Natural killer cell (primary cell): ENCODE measurements at regions of chr7 and their contacts with region 1.

Region 1: DNA sequence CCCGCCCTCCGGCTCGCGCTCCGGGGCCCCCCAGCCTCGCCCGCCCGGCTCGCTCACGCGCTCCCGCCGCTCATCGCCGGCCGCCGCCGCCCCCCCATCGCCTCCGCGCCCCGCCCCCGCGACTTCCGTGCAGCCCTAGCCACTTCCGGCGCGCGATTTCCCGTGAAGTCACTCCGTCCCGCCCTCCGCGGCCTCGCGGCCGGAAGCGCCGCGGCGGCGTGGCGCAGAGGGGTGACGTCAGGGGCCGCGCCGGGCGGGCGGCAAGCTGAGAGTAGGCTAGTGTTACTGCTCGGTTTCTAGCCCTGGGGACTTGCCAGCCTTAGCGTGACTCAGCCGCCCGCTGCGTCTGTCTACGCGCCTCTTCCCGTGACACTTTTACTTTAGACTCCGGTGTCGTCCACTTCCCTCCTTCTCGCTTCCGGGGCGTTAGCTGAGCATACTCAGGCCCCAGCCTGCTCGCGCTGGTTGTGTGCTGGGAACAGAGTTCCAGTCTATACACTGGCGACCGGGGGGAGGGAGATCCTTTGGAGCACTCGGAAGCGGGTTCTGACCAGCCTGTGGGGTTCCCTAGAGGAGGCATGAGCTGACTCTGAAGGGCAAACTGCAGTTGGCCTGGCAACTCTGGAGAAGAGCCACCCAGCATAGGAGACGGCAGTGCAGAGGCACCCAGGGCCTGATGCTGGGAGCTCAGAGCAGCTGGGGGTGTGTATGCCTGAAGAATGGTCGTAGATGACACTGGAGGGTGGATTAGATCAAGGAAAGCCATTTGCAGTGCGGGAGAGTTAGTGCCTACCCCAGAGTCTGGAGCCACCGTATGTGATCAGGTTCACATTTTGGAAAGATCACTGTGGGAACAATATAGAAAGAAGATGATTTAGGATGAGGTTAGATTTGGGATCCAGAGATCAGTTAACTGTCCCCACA is at the start of gene PURB:
- DNase-seq: peak; percentile 98 to 99
- ATAC-seq: peak; percentile 83 to 94 (median 86)
- H3K4me3 ChIP-seq: peak within 1 kb of the TSS; percentile 75
- H3K4me3 Mint-ChIP-seq: peak within 1 kb of the TSS; percentile 99
- H3K27ac ChIP-seq: peak within 1 kb of the TSS; percentile 97
- H3K27ac Mint-ChIP-seq: peak within 1 kb of the TSS; percentile 100
- H3K4me1 ChIP-seq: peaks cover 35% of the 10 kb centered on the region
- H3K4me1 Mint-ChIP-seq: peaks cover 34 to 45% of the 10 kb centered on the region in 2 donors
- H3K27me3 ChIP-seq: no peaks in the 10 kb centered on the region
- H3K27me3 Mint-ChIP-seq: no peaks in the 10 kb centered on the region
- CTCF ChIP-seq: no peak
- total RNA-seq, gene PURB: 28.5 to 36.0 (median 33.7) TPM

Region 2: DNA sequence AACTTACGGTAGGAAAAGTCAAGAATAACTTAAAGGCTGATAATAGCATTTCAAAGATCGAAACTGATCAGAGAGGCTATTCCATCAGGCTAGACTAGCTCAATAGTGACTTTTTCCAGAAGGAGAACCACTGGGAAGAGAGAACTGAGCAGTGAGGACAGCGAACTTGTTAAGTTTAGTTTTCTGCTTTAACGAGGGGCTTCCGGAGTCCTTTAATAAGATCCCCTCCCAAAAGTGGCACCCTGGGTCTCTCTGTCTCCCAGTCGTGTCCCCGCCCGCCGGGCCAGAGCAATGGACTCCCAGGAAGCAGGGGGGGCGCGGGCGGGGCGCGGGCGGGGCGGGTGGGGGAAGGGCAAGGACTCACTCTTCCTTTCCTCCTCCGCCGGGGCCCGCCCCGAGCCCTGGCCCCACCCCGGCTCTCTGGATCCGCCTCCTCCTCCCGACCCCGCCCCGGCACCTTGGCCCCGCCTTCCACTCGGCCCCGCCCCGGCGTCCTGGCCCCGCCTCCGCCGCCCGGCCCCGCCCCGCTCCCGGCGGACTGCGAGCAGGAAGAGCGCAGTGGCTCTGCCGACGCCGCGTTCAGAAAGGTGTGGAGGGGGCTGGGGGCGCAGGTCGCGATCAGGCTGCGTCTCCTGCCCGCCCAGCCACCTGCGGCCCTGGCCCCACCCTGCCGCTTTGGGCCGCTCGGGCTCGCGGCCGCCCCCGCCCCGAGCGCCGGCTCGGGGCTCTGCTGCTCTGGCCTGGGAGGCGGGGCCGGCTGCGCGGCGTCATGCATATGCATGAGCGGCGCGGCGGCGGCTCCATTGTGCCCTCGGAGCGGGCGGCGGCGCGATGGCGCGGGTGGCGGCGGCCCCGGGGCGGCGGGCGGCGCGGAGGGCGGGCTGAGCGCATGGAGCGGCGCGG is 137.4 kb before region 1 on chr7 and contains the start of gene ZMIZ2:
- intact Hi-C with region 1: no loop called
- DNase-seq: peak; percentile 93 to 94
- ATAC-seq: peak; percentile 89 to 97 (median 93)
- H3K4me3 ChIP-seq: peak within 1 kb of the TSS; percentile 78
- H3K4me3 Mint-ChIP-seq: peak within 1 kb of the TSS; percentile 94
- H3K27ac ChIP-seq: peak within 1 kb of the TSS; percentile 77
- H3K27ac Mint-ChIP-seq: peak within 1 kb of the TSS; percentile 85 to 96
- H3K4me1 ChIP-seq: peaks cover 31% of the 10 kb centered on the region
- H3K4me1 Mint-ChIP-seq: peaks cover 37 to 48% of the 10 kb centered on the region in 2 donors
- H3K27me3 ChIP-seq: no peaks in the 10 kb centered on the region
- H3K27me3 Mint-ChIP-seq: no peaks in the 10 kb centered on the region
- CTCF ChIP-seq: no peak
- total RNA-seq, gene ZMIZ2: 152 to 170 (median 167) TPM

Region 3: DNA sequence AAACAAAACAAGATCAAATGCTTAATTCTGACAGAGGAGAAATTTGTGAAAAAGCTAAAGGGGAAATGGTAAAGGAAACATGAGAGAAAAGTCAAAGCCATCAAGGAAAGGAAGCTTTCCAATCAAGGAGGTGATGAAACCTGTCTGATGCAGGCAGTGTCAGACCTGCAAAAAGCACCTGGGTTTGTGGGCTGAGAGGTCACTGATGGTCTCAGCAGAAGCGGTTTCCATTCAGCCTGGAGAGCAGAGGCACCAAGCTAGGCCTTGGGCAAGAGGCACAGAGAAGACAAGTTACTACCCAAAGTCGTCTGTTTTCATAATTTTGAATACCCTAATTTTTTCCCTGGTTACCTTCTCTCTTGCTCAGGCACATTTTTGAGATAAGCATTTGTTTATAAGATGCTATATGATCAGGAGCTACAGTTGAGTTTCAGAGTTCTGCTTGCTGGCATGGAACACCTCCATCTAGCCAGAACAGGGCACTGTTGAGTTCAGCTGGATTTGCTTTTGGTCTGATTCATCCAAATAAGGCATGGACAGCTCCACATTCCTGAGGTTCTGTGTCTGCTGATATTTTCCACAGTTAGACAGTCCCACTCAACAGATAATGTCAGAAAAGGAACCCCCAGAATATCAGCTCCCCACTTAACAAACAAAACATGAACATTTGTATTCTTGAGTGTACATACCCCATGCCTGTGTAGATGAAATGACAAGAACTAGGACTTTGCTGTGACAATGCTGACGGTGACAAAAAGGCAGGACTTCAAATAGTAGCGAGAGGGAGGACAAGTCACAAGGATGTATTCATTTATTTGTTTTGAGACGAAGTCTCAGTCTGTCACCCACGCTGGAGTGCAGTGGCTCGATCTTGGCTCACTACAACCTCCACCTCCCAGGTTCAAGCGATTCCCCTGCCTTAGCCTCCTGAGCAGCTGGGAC is 94.1 kb before region 1 on chr7:
- intact Hi-C with region 1: no loop called
- DNase-seq: no peak
- ATAC-seq: no peak
- H3K4me3 ChIP-seq: no peak overlapping the region
- H3K4me3 Mint-ChIP-seq: no peak overlapping the region
- H3K27ac ChIP-seq: no peak overlapping the region
- H3K27ac Mint-ChIP-seq: peak overlapping the region in 1 of 2 donors; percentile 9
- H3K4me1 ChIP-seq: peaks cover 9% of the 10 kb centered on the region
- H3K4me1 Mint-ChIP-seq: peaks cover 0 to 3% of the 10 kb centered on the region in 2 donors
- H3K27me3 ChIP-seq: no peaks in the 10 kb centered on the region
- H3K27me3 Mint-ChIP-seq: no peaks in the 10 kb centered on the region
- CTCF ChIP-seq: no peak

Region 4: DNA sequence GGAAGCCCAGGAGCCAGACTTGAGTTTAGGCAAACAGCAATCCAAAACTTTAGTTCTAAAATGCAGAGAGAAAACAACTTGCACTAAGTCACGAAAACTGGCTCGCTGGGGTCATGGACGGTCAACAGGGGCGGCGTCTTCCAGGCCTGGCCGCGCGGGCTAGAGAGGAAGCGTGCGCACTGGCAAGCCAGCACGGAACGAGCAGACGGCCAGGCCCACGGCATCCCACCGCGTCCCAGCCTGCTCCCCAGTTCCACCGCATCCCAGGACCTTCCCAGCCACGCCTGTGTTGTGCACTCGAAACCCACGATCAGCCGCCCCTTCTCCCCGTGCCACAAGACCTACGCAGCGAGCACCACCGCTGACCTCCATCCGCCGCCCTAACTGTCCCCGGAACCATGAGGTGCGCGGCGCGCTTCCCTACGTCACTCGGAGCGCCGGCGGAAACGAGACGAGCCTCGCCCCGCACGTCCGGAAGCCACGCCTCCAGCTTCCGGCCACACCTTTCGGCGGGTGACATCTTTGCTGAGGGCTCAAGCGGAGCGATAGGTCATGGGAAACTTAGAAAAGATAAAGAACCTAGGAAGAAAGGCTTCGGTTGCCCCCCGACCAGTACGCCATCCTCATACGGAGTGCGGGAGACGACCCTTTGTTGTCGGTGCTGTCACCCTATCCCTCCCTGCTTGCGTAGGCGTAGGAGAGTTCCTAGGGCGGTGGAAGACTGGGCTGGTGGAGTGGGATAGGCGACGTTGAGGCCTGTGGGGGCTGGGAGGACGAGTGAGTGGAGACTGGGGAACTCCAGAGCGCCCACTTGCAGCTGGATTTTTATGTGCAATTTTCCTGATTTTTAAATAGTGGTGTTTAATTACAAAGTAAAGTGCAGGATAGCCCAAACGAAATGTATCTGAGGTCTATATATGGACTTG is 225.9 kb after region 1 on chr7 and contains the start of gene TBRG4:
- intact Hi-C with region 1: loop called (anchors 1 kb)
- DNase-seq: peak; percentile 94 to 98
- ATAC-seq: peak; percentile 93 to 97 (median 96)
- H3K4me3 ChIP-seq: peak within 1 kb of the TSS; percentile 66
- H3K4me3 Mint-ChIP-seq: peak within 1 kb of the TSS; percentile 100
- H3K27ac ChIP-seq: peak within 1 kb of the TSS; percentile 90
- H3K27ac Mint-ChIP-seq: peak within 1 kb of the TSS; percentile 100
- H3K4me1 ChIP-seq: peaks cover 33% of the 10 kb centered on the region
- H3K4me1 Mint-ChIP-seq: peaks cover 23 to 37% of the 10 kb centered on the region in 2 donors
- H3K27me3 ChIP-seq: no peaks in the 10 kb centered on the region
- H3K27me3 Mint-ChIP-seq: peaks cover 2 to 10% of the 10 kb centered on the region in 2 donors
- CTCF ChIP-seq: no peak
- total RNA-seq, gene TBRG4: 48.6 to 56.7 (median 55.9) TPM